Esophagus squamous epithelium (tissue), 5 donors: ENCODE measurements at regions of chr6 and their contacts with region 1.

Region 1: DNA sequence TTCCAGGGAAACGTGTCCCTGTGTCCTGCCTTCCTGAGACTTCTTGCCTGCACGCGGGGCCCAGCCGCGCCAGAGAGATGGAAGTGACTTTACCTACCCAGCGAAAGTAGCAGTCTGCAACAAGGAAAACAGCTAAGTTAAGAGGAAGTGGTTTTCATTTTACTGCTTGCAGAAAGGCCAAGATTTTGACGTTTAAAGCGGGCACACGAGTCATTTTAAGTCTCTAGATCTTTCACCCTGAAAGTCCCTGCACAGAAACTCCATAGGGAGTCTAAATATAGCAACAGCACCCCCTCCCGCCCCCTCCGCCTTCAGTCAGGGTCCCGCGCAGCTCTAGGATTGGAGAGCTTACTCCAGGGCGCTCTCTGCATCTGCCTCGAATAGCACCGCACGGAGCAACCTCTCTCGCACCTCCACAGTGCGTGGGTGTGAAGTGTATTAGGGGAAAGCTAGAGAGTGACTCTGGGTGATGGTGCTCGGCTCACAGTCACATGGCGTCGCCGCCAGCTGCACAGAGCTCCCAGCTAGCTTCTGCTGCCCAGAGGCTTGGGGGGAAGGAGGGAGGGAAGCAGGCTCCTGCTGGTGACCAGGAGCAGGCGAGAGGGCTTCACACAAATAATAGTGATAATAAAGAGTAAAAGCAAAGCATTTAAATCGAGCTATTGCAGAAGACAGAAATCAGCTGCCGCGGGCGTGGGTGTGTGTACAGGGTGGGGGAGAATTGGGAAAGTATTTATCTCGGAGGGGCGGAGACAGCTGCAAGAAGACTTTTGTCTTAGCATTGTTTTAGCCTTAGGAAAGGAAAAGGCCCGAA is 1.8 kb upstream of the KCNQ5 start:
- DNase-seq: no peak
- H3K4me3 ChIP-seq: peak overlapping the region in 3 of 4 donors; percentile 52 to 76 (median 59)
- H3K27ac ChIP-seq: no peak overlapping the region
- H3K4me1 ChIP-seq: peaks cover 22 to 46% (median 24%) of the 10 kb centered on the region in 3 donors
- H3K27me3 ChIP-seq: peaks cover 0 to 76% (median 4%) of the 10 kb centered on the region in 4 donors
- CTCF ChIP-seq: no peak
- POLR2A ChIP-seq: no peak

Region 2: GRCh38 chr6:73129653-73130443 is 509.8 kb after region 1 on chr6:
- intact Hi-C with region 1: loop called (anchors 10 kb)
- DNase-seq: peak; percentile 12
- H3K4me3 ChIP-seq: no peak overlapping the region
- H3K27ac ChIP-seq: no peak overlapping the region
- H3K4me1 ChIP-seq: peaks cover 0 to 12% (median 0%) of the 10 kb centered on the region in 3 donors
- H3K27me3 ChIP-seq: peaks cover 0 to 84% (median 0%) of the 10 kb centered on the region in 4 donors
- CTCF ChIP-seq: peak; percentile 85 to 99 (median 90)
- POLR2A ChIP-seq: no peak